Dendritic cell treated with granulocyte-macrophage colony-stimulating factor and Interleukin-4, amounts not matched to agents 40 ng/mL and 50 ng/mL, for 4 days (primary cell): ENCODE measurements at regions of chr5 and their contacts with region 1.

Region 1: DNA sequence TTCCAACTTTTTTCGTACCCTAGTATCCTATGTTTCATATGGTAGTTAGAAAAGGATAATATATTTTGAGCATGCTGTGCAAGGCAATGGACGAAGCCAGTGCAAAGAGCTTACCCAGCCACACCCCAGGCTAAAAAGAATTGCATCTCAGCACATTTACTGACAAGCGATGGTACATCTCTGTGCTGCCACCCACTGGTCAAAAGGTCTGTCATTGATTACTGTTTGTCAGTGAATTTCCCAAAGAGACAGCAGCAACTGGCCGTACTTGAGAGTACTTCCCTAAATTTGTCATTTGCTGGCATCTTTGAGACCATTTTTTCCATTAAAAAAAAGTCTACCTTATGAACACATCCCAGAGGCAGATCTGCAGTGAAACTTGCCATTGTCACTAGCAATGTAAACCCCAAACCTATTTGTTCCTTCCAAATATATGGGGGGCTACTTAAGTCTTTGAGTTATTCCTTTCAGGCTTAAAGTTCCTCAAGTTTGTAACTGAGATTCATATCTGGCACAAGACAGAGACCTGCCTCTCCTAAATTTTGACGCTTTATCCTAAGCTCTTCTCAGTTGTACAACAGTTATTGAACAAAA is 184.3 kb downstream of the CTNND2 start:
- H3K4me3 Mint-ChIP-seq: no peak overlapping the region
- H3K27ac Mint-ChIP-seq: no peak overlapping the region
- H3K4me1 Mint-ChIP-seq: no peaks in the 10 kb centered on the region
- H3K27me3 Mint-ChIP-seq: no peaks in the 10 kb centered on the region

Region 2: GRCh38 chr5:11268891-11269290 is 451.1 kb before region 1 on chr5:
- intact Hi-C with region 1: loop called (anchors 1 kb)
- H3K4me3 Mint-ChIP-seq: no peak overlapping the region
- H3K27ac Mint-ChIP-seq: no peak overlapping the region
- H3K4me1 Mint-ChIP-seq: no peaks in the 10 kb centered on the region
- H3K27me3 Mint-ChIP-seq: no peaks in the 10 kb centered on the region